ENCODE measurements at regions of chr9 and their contacts with region 1.

Region 1: DNA sequence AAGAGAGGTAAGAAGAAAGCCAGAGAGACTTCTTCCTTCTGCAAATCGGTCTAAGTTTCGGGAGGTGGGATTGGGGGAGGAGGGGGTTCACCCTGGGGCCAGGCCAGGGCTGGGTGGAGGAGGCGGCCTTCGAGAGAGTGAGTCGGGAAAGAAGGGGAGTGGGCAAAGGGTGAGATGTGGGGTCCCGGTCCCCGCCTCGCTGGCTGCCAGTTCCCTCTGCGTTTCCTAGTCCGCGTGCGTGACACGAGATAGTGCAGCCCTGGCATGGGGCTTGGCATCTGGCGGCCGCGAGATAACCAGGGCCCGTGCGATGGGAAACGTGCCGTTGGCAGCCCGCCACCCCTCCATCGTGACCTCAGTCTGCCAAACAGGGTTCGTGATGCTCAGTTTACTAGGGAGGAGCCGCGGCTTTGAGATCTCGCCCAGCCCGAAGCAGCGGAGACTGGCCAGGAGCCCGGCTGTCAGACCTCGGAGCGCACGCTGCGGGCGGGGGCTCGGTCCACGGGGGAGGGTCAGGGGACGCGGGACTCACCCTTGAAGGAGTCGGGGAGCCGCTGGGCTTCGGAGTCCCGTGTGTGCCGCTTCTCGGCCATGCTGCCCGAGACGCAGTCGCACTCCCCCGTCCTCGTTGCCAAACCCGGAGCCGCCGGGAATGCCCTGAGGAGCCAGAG is at the start of gene STOM:
- DNase-seq: peak in 3 of 9 donors; percentile 60 to 66 (median 65)
- ATAC-seq: peak; percentile 58
- H3K4me3 ChIP-seq: peak within 1 kb of the TSS; percentile 91
- H3K4me3 Mint-ChIP-seq: peak within 1 kb of the TSS; percentile 88 to 99 (median 94)
- H3K27ac ChIP-seq: peak within 1 kb of the TSS; percentile 76
- H3K27ac Mint-ChIP-seq: peak within 1 kb of the TSS; percentile 87 to 99 (median 96)
- H3K4me1 ChIP-seq: peaks cover 18 to 24% of the 10 kb centered on the region in 2 donors
- H3K4me1 Mint-ChIP-seq: peaks cover 22 to 57% (median 36%) of the 10 kb centered on the region in 7 donors
- H3K27me3 ChIP-seq: no peaks in the 10 kb centered on the region
- H3K27me3 Mint-ChIP-seq: no peaks in the 10 kb centered on the region
- total RNA-seq, gene STOM: 8.8 to 59.8 (median 16.1) TPM

Region 2: GRCh38 chr9:120714088-120714845 is 655.5 kb before region 1 on chr9 and contains the start of gene MEGF9:
- CTCF ChIA-PET with region 1: no interaction called
- POLR2A ChIA-PET with region 1: no interaction called
- intact Hi-C with region 1: loop called (anchors 2 to 5 kb)
- DNase-seq: peak; percentile 90 to 97 (median 94)
- ATAC-seq: peak; percentile 98
- H3K4me3 ChIP-seq: peak within 1 kb of the TSS; percentile 85
- H3K4me3 Mint-ChIP-seq: peak within 1 kb of the TSS; percentile 82 to 98 (median 87)
- H3K27ac ChIP-seq: peak within 1 kb of the TSS; percentile 79
- H3K27ac Mint-ChIP-seq: peak within 1 kb of the TSS; percentile 31 to 98 (median 87)
- H3K4me1 ChIP-seq: peaks cover 22% of the 10 kb centered on the region in 2 donors
- H3K4me1 Mint-ChIP-seq: peaks cover 18 to 43% (median 36%) of the 10 kb centered on the region in 7 donors
- H3K27me3 ChIP-seq: no peaks in the 10 kb centered on the region
- H3K27me3 Mint-ChIP-seq: no peaks in the 10 kb centered on the region
- total RNA-seq, gene MEGF9: 9.5 to 35.4 (median 11.1) TPM

Region 3: GRCh38 chr9:120875954-120876841 is 493.5 kb before region 1 on chr9:
- CTCF ChIA-PET with region 1: no interaction called
- POLR2A ChIA-PET with region 1: no interaction called
- intact Hi-C with region 1: loop called in 1 of 2 experiments (anchors 1 kb)
- DNase-seq: peak; percentile 50 to 91 (median 56)
- ATAC-seq: peak; percentile 64
- H3K4me3 ChIP-seq: peak overlapping the region; percentile 66
- H3K4me3 Mint-ChIP-seq: peak overlapping the region; percentile 81 to 95 (median 85)
- H3K27ac ChIP-seq: peak overlapping the region; percentile 88
- H3K27ac Mint-ChIP-seq: peak overlapping the region; percentile 76 to 97 (median 90)
- H3K4me1 ChIP-seq: peaks cover 31 to 39% of the 10 kb centered on the region in 2 donors
- H3K4me1 Mint-ChIP-seq: peaks cover 38 to 78% (median 69%) of the 10 kb centered on the region in 7 donors
- H3K27me3 ChIP-seq: no peaks in the 10 kb centered on the region
- H3K27me3 Mint-ChIP-seq: no peaks in the 10 kb centered on the region

Region 4: GRCh38 chr9:121267689-121268597 is 101.8 kb before region 1 on chr9 and contains the start of gene GSN:
- CTCF ChIA-PET with region 1: no interaction called
- POLR2A ChIA-PET with region 1: no interaction called
- intact Hi-C with region 1: no loop called
- DNase-seq: peak in 7 of 9 donors; percentile 3 to 56 (median 14)
- ATAC-seq: peak; percentile 80
- H3K4me3 ChIP-seq: peak within 1 kb of the TSS; percentile 36
- H3K4me3 Mint-ChIP-seq: peak within 1 kb of the TSS; percentile 70 to 86 (median 80)
- H3K27ac ChIP-seq: no peak within 1 kb of the TSS
- H3K27ac Mint-ChIP-seq: peak within 1 kb of the TSS in 3 of 9 donors; percentile 14 to 73 (median 45)
- H3K4me1 ChIP-seq: peaks cover 0 to 5% of the 10 kb centered on the region in 2 donors
- H3K4me1 Mint-ChIP-seq: peaks cover 6 to 28% (median 19%) of the 10 kb centered on the region in 7 donors
- H3K27me3 ChIP-seq: no peaks in the 10 kb centered on the region
- H3K27me3 Mint-ChIP-seq: peaks cover 0 to 33% (median 9%) of the 10 kb centered on the region in 5 donors
- total RNA-seq, gene GSN: 4.2 to 34.6 (median 7.8) TPM

Region 5: GRCh38 chr9:121322037-121322775 is 47.5 kb before region 1 on chr9:
- CTCF ChIA-PET with region 1: interaction called, 15 read pairs
- POLR2A ChIA-PET with region 1: no interaction called
- intact Hi-C with region 1: loop called (anchors 1 kb)
- DNase-seq: no peak
- ATAC-seq: no peak
- H3K4me3 ChIP-seq: no peak overlapping the region
- H3K4me3 Mint-ChIP-seq: no peak overlapping the region
- H3K27ac ChIP-seq: no peak overlapping the region
- H3K27ac Mint-ChIP-seq: no peak overlapping the region
- H3K4me1 ChIP-seq: peaks cover 5 to 16% of the 10 kb centered on the region in 2 donors
- H3K4me1 Mint-ChIP-seq: peaks cover 0 to 35% (median 7%) of the 10 kb centered on the region in 7 donors
- H3K27me3 ChIP-seq: no peaks in the 10 kb centered on the region
- H3K27me3 Mint-ChIP-seq: no peaks in the 10 kb centered on the region

Region 6: GRCh38 chr9:121359351-121360294 is 10.1 kb before region 1 on chr9:
- CTCF ChIA-PET with region 1: no interaction called
- POLR2A ChIA-PET with region 1: no interaction called
- intact Hi-C with region 1: loop called in 1 of 2 experiments (anchors 1 kb)
- DNase-seq: no peak
- ATAC-seq: no peak
- H3K4me3 ChIP-seq: no peak overlapping the region
- H3K4me3 Mint-ChIP-seq: peak overlapping the region in 1 of 10 donors; percentile 53
- H3K27ac ChIP-seq: no peak overlapping the region
- H3K27ac Mint-ChIP-seq: peak overlapping the region in 3 of 9 donors; percentile 29 to 86 (median 46)
- H3K4me1 ChIP-seq: peaks cover 11 to 83% of the 10 kb centered on the region in 2 donors
- H3K4me1 Mint-ChIP-seq: peaks cover 7 to 55% (median 19%) of the 10 kb centered on the region in 7 donors
- H3K27me3 ChIP-seq: no peaks in the 10 kb centered on the region
- H3K27me3 Mint-ChIP-seq: no peaks in the 10 kb centered on the region

Region 7: GRCh38 chr9:122264360-122265148 is 894.8 kb after region 1 on chr9 and contains the starts of genes MRRF and RBM18:
- CTCF ChIA-PET with region 1: no interaction called
- POLR2A ChIA-PET with region 1: no interaction called
- intact Hi-C with region 1: loop called in 1 of 2 experiments (anchors 5 kb)
- DNase-seq: peak; percentile 80 to 93 (median 88)
- ATAC-seq: peak; percentile 92
- H3K4me3 ChIP-seq: peak within 1 kb of the TSS; percentile 93
- H3K4me3 Mint-ChIP-seq: peak within 1 kb of the TSS; percentile 88 to 100 (median 98)
- H3K27ac ChIP-seq: peak within 1 kb of the TSS; percentile 94
- H3K27ac Mint-ChIP-seq: peak within 1 kb of the TSS; percentile 76 to 100 (median 99)
- H3K4me1 ChIP-seq: peaks cover 18 to 25% of the 10 kb centered on the region in 2 donors
- H3K4me1 Mint-ChIP-seq: peaks cover 40 to 71% (median 61%) of the 10 kb centered on the region in 7 donors
- H3K27me3 ChIP-seq: no peaks in the 10 kb centered on the region
- H3K27me3 Mint-ChIP-seq: peaks cover 0 to 2% (median 0%) of the 10 kb centered on the region in 5 donors
- total RNA-seq, gene MRRF: 28.1 to 35.8 (median 33.3) TPM
- total RNA-seq, gene RBM18: 14.2 to 22.9 (median 15.8) TPM

Measured in naive thymus-derived CD4-positive, alpha-beta T cell (primary cell).